Heart left ventricle (tissue), 16 donors: ENCODE measurements at regions of chr11 and their contacts with region 1.

Region 1: GRCh38 chr11:49221112-49221511 is 12.7 kb upstream of the FOLH1 start:
- DNase-seq: no peak
- ATAC-seq: no peak
- H3K4me3 ChIP-seq: no peak overlapping the region
- H3K27ac ChIP-seq: no peak overlapping the region
- H3K4me1 ChIP-seq: no peaks in the 10 kb centered on the region
- H3K27me3 ChIP-seq: peaks cover 0 to 2% (median 0%) of the 10 kb centered on the region in 9 donors
- CTCF ChIP-seq: no peak
- POLR2A ChIP-seq: no peak

Region 2: GRCh38 chr11:49302360-49302759 is 81.2 kb after region 1 on chr11:
- intact Hi-C with region 1: no loop called
- DNase-seq: no peak
- ATAC-seq: no peak
- H3K4me3 ChIP-seq: no peak overlapping the region
- H3K27ac ChIP-seq: no peak overlapping the region
- H3K4me1 ChIP-seq: no peaks in the 10 kb centered on the region
- H3K27me3 ChIP-seq: no peaks in the 10 kb centered on the region
- CTCF ChIP-seq: no peak
- POLR2A ChIP-seq: no peak

Region 3: GRCh38 chr11:49377978-49378377 is 156.9 kb after region 1 on chr11:
- intact Hi-C with region 1: loop called in 2 of 10 experiments (anchors 5 to 10 kb)
- DNase-seq: no peak
- ATAC-seq: no peak
- H3K4me3 ChIP-seq: no peak overlapping the region
- H3K27ac ChIP-seq: no peak overlapping the region
- H3K4me1 ChIP-seq: peaks cover 0 to 8% (median 0%) of the 10 kb centered on the region in 12 donors
- H3K27me3 ChIP-seq: no peaks in the 10 kb centered on the region
- CTCF ChIP-seq: no peak
- POLR2A ChIP-seq: no peak

Region 4: DNA sequence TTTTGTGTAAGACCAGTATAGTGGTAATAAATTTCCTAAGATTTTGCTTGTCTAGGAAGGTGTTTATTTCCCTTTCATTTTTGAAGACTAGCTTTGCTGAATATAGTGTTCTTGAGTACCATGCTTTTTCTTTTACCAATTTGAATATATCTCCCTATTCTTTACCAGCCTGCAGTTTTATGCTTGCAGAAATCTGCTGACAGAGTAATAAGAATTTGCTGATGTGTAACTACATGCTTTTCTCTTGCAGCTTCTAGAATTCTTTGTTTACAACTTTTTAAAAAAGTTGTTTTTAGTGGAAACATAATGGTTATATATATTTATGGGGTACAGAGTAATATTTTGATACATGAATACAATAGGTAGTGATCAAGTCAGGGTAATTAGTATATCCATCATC is 312.1 kb after region 1 on chr11:
- intact Hi-C with region 1: loop called in 5 of 10 experiments (anchors 5 to 10 kb)
- DNase-seq: no peak
- ATAC-seq: no peak
- H3K4me3 ChIP-seq: no peak overlapping the region
- H3K27ac ChIP-seq: no peak overlapping the region
- H3K4me1 ChIP-seq: no peaks in the 10 kb centered on the region
- H3K27me3 ChIP-seq: no peaks in the 10 kb centered on the region
- CTCF ChIP-seq: no peak
- POLR2A ChIP-seq: no peak